Activated T-helper 1 cell treated with anti-CD3 and anti-CD28 coated beads, Interleukin-12 subunit alpha, Interleukin-12 subunit beta, Interleukin-2, Interleukin-4 antibody, amounts not matched to agents 30 ng/mL and 10 ng/mL and 1 ng/mL, durations not matched to agents 14 hours and 24 hours and 36 hours (primary cell): ENCODE measurements at regions of chr11 and their contacts with region 1.

Region 1: GRCh38 chr11:86068951-86069407 is at the start of gene PICALM:
- DNase-seq: peak; percentile 97
- H3K4me3 Mint-ChIP-seq: peak within 1 kb of the TSS; percentile 92
- H3K27ac Mint-ChIP-seq: peak within 1 kb of the TSS; percentile 97
- H3K4me1 Mint-ChIP-seq: peaks cover 33% of the 10 kb centered on the region
- H3K27me3 Mint-ChIP-seq: no peaks in the 10 kb centered on the region
- total RNA-seq, gene PICALM: 174 and 177 TPM in 2 replicates

Region 2: DNA sequence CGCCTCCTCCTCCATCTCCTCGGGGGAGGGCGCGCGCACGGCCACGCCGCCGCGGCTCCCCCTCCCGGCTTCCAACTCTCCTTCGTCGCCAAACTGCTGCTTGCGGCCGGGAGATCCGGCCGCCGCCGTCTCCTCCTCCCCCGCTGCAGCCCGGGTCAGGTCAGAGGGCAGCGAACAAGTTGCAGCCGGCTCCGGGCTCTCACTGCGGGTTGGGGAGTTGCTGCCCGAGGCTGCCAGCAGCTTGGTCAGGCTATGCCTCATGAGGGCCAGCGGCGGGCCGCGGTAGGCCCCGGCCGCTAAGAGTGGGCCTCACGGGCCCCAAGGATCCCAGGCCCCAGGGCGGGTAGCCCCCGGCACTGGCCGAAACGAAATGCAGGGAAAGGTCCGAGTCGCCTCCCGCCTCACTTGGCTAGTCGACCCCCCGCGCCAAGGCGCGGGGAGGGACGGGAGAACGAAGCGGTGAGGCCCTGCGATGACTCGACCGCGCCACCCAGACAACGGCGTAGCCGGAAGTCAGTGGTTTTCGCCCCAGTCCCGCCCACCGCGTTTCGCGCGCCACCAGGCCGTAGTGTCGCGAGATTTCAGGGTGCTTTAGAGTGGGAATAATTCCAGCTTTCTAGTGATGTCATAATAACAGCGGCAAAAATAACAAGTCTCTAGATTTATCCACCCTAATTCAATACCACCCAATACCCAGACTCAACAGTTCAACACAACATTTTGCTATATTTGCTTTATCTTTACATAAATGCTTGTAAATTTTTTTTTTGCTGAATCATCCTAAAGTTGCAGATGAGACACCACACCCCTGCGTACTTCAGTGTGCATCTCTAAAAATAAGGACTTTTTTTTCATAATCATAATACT is 404.1 kb before region 1 on chr11 and contains the start of gene CREBZF:
- intact Hi-C with region 1: loop called (anchors 2 kb)
- DNase-seq: peak; percentile 94
- H3K4me3 Mint-ChIP-seq: peak within 1 kb of the TSS; percentile 99
- H3K27ac Mint-ChIP-seq: peak within 1 kb of the TSS; percentile 97
- H3K4me1 Mint-ChIP-seq: peaks cover 51% of the 10 kb centered on the region
- H3K27me3 Mint-ChIP-seq: no peaks in the 10 kb centered on the region
- total RNA-seq, gene CREBZF: 52.0 and 55.9 TPM in 2 replicates

Region 3: GRCh38 chr11:86047275-86047991 is 21.5 kb before region 1 on chr11:
- intact Hi-C with region 1: loop called (anchors 1 kb)
- DNase-seq: no peak
- H3K4me3 Mint-ChIP-seq: peak overlapping the region; percentile 69
- H3K27ac Mint-ChIP-seq: peak overlapping the region; percentile 91
- H3K4me1 Mint-ChIP-seq: peaks cover 88% of the 10 kb centered on the region
- H3K27me3 Mint-ChIP-seq: no peaks in the 10 kb centered on the region

Region 4: DNA sequence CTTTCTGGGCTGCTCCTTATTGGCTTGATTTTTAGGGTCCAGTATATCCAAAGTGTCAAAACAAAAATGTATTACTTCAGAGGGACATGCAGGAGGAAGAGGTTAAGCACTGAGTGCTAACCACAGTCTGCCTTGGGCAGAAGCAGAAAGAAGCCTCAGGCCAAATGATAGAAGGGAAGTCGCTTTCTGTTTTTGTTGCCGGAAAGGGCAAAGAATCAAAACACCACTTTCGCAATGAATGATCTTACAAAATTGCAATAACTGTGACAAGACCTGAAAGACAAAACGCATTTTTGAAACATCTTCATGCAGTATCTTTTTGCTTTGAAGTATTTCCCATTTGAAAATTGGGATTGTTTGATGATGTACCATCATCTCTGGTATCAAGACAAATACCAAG is 70.0 kb after region 1 on chr11:
- intact Hi-C with region 1: loop called (anchors 1 kb)
- DNase-seq: peak; percentile 37
- H3K4me3 Mint-ChIP-seq: peak overlapping the region; percentile 57
- H3K27ac Mint-ChIP-seq: peak overlapping the region; percentile 81
- H3K4me1 Mint-ChIP-seq: peaks cover 75% of the 10 kb centered on the region
- H3K27me3 Mint-ChIP-seq: no peaks in the 10 kb centered on the region

Region 5: GRCh38 chr11:86202013-86202336 is 133.0 kb after region 1 on chr11:
- intact Hi-C with region 1: loop called (anchors 2 kb)
- DNase-seq: no peak
- H3K4me3 Mint-ChIP-seq: no peak overlapping the region
- H3K27ac Mint-ChIP-seq: no peak overlapping the region
- H3K4me1 Mint-ChIP-seq: peaks cover 21% of the 10 kb centered on the region
- H3K27me3 Mint-ChIP-seq: no peaks in the 10 kb centered on the region

Region 6: GRCh38 chr11:86511086-86511551 is 442.1 kb after region 1 on chr11:
- intact Hi-C with region 1: loop called (anchors 2 kb)
- DNase-seq: no peak
- H3K4me3 Mint-ChIP-seq: no peak overlapping the region
- H3K27ac Mint-ChIP-seq: no peak overlapping the region
- H3K4me1 Mint-ChIP-seq: no peaks in the 10 kb centered on the region
- H3K27me3 Mint-ChIP-seq: no peaks in the 10 kb centered on the region